Colonic mucosa (tissue), 4 donors: ENCODE measurements at regions of chr7 and their contacts with region 1.

Region 1: DNA sequence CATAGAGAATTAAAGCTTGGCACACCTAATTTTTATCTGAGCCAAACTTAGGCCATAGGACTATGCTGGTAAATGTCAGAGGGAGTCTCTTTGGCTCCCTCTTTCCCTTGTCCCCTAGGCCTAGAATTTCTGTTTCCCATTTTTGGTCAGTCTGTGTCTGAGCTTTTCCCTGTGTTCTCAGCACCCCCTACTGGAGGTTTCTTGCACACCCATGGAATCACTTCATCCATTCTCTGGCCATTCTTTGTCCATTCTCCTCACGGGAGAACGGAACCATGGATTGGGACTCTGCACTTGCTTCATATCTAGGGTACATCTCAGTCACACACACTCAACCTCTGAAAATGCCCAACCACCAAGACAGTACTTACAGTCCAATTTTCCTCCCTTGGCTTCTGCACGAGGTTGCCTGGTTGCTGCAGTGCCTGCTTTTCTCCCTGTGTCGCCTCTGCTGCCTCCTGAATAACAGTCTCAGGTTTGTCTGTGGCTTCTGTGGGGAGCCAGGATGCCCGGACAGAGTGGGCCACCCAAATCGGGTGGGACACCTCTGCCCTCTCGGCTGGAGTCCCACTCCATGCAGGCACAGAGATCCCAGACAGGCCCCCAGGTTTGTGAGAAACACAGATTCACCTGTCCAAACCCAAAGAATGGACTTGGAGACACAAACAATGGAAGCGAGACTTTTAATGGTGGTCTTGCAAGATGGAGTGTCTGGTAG is 35.1 kb upstream of the DNAH11 start:
- DNase-seq: peak; percentile 67
- H3K4me3 ChIP-seq: no peak overlapping the region
- H3K27ac ChIP-seq: no peak overlapping the region
- H3K4me1 ChIP-seq: no peaks in the 10 kb centered on the region
- H3K27me3 ChIP-seq: no peaks in the 10 kb centered on the region
- CTCF ChIP-seq: peak; percentile 65

Region 2: DNA sequence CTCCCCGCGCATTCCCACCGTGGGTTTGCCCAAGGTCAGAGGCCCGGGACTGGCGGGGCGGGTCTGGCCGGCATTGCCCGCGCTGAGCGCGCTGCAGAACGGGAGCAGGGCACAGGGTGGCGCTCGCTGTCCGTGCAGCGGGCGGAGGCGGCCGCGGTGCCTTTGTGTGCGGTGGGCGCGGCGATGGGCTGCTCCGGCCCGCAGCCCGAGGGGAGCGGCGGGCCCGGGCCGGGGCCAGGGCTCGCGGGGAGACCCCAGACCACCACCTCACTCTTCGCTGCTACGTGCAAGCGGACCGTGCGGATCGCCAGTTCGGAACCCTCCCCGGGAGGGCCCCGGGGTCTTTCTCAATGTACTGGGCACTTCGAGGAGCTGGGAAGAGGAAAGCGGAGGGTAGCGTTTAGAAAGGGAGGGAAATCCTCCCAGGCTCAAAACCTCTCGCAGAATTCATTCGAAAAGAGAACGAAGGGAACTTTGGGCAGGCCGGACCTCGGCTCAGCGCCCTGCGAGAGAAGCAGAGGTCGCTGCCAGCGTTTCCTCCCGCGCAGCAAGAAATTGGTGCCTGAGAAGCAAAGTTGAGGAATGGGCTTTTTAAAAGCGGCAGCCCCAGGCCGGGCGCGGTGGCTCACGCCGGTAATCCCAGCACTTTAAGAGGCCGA is 729.6 kb before region 1 on chr7:
- intact Hi-C with region 1: loop called (anchors 5 kb)
- DNase-seq: peak; percentile 36
- H3K4me3 ChIP-seq: peak overlapping the region; percentile 23
- H3K27ac ChIP-seq: no peak overlapping the region
- H3K4me1 ChIP-seq: peaks cover 3% of the 10 kb centered on the region
- H3K27me3 ChIP-seq: peaks cover 72% of the 10 kb centered on the region
- CTCF ChIP-seq: peak; percentile 48

Region 3: DNA sequence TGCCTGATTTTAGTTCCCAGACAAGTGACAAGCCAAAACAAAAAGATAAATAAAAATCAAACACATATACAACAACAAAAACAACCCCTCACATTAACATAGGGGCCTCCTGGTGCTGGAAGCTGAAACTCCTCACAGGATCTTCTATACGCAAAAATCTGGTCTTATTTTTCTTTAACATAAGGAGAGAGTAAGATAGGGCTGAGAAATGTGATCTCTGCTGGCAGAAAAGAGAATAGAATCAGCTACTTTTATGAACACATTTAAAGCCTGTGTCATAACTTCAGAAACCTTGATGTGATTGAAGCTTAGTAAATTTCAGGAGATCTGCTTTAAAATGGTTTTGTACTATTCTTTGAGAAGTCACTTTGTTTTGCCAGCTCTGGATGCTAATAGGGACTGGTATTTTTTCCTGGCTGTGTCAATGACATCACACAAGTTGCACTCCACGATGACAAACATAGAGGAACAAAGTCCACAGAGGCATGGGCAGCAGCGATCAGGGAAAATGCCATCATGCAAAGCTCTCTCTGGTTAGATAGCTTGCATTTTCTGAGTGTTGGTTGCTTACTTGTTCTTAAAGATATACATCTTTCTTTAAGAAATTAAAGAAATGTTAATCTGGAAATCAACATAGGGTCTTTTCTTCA is 256.5 kb before region 1 on chr7:
- intact Hi-C with region 1: no loop called
- DNase-seq: peak; percentile 36
- H3K4me3 ChIP-seq: no peak overlapping the region
- H3K27ac ChIP-seq: no peak overlapping the region
- H3K4me1 ChIP-seq: no peaks in the 10 kb centered on the region
- H3K27me3 ChIP-seq: peaks cover 9% of the 10 kb centered on the region
- CTCF ChIP-seq: no peak

Region 4: GRCh38 chr7:21261627-21262594 is 245.9 kb before region 1 on chr7:
- intact Hi-C with region 1: loop called (anchors 2 kb)
- DNase-seq: peak; percentile 19
- H3K4me3 ChIP-seq: no peak overlapping the region
- H3K27ac ChIP-seq: no peak overlapping the region
- H3K4me1 ChIP-seq: no peaks in the 10 kb centered on the region
- H3K27me3 ChIP-seq: no peaks in the 10 kb centered on the region
- CTCF ChIP-seq: peak; percentile 36

Region 5: GRCh38 chr7:21427182-21427870 is 80.5 kb before region 1 on chr7:
- intact Hi-C with region 1: no loop called
- DNase-seq: peak; percentile 99
- H3K4me3 ChIP-seq: peak overlapping the region; percentile 81
- H3K27ac ChIP-seq: peak overlapping the region; percentile 97
- H3K4me1 ChIP-seq: peaks cover 4% of the 10 kb centered on the region
- H3K27me3 ChIP-seq: no peaks in the 10 kb centered on the region
- CTCF ChIP-seq: no peak